CD8-positive, alpha-beta T cell (primary cell): ENCODE measurements at regions of chr1 and their contacts with region 1.

Region 1: GRCh38 chr1:34865981-34866761 is 6.6 kb upstream of the SMIM12 start:
- DNase-seq: peak; percentile 83 to 98 (median 92)
- ATAC-seq: peak; percentile 82
- H3K4me3 ChIP-seq: peak overlapping the region; percentile 68 to 78
- H3K4me3 Mint-ChIP-seq: peak overlapping the region; percentile 88
- H3K27ac ChIP-seq: peak overlapping the region; percentile 67 to 87
- H3K27ac Mint-ChIP-seq: peak overlapping the region; percentile 87
- H3K4me1 ChIP-seq: peaks cover 56% of the 10 kb centered on the region
- H3K4me1 Mint-ChIP-seq: peaks cover 44% of the 10 kb centered on the region
- H3K27me3 ChIP-seq: no peaks in the 10 kb centered on the region
- H3K27me3 Mint-ChIP-seq: no peaks in the 10 kb centered on the region
- CTCF ChIP-seq: peak; percentile 97

Region 2: DNA sequence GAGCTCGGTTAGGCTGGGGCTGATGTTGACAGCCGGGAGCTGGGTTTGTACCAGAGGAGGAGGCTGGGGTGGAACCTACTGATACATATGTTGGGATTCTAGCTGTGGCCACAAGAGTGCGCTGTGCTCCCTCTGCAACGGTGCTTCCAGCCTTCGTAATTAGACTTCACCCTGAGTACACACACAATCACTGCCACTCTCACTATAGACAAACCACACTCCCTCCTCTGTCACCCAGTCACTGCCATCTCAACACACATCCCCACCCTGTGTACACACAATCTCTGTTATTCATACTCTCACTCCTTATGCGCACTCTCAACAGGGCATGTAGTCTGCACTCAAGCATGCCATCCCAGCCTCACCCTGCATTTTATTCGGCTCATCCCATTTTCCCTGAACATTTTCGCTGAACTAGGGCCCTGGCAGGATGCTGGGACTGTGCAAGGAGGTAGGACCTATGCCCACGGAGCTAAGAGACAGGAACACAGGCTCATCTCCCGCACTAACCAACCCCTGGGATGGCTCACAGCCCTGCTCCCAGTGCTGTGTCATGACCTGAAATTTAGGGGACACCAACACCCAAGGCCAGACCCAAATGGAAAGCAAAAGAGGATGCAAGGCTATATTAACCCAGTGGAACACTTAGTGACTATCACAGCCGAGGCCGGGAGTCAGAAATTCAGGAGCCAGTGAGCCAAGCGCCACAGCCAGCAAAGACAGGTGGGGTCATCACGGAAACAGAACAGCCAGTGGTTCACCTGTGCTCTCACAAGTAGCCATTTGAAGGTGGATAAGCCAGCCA is 79.4 kb before region 1 on chr1:
- CTCF ChIA-PET with region 1: interaction called, 5 read pairs
- POLR2A ChIA-PET with region 1: interaction called, 3 read pairs
- intact Hi-C with region 1: loop called in 1 of 2 experiments (anchors 1 kb)
- DNase-seq: peak; percentile 25 to 76 (median 59)
- ATAC-seq: peak; percentile 89
- H3K4me3 ChIP-seq: no peak overlapping the region
- H3K4me3 Mint-ChIP-seq: no peak overlapping the region
- H3K27ac ChIP-seq: no peak overlapping the region
- H3K27ac Mint-ChIP-seq: no peak overlapping the region
- H3K4me1 ChIP-seq: no peaks in the 10 kb centered on the region
- H3K4me1 Mint-ChIP-seq: peaks cover 3% of the 10 kb centered on the region
- H3K27me3 ChIP-seq: peaks cover 9% of the 10 kb centered on the region in 2 experiments
- H3K27me3 Mint-ChIP-seq: peaks cover 51% of the 10 kb centered on the region
- CTCF ChIP-seq: peak; percentile 79

Region 3: DNA sequence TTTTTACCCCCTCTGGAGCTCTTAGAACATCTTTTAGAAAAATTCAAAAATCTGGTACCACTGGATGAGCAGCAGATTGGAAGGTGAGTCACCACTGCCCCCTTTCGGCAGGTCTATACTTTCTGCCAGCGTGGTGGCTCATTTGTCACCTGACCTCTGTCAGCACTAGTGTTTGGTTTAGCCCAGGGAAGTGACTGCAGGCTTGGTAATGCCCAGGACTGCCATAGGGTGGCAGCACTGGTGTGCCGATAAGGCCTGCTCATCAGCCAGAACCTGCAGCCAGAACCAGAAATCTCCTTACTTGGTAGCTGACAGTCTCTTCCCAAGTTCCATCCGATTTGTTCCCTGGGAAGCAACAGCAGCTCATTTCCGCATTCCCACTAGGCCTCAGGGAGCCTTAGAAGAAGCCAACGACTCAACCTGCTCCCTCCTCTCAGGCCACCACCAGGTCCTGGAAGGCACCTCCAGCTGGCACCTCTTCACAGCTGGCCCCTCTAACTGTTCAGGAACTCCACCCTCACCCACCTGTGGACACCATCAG is 13.4 kb before region 1 on chr1:
- CTCF ChIA-PET with region 1: interaction called, 129 read pairs
- POLR2A ChIA-PET with region 1: interaction called, 7 read pairs
- intact Hi-C with region 1: loop called (anchors 1 kb)
- DNase-seq: peak; percentile 77 to 96 (median 87)
- ATAC-seq: peak; percentile 100
- H3K4me3 ChIP-seq: no peak overlapping the region
- H3K4me3 Mint-ChIP-seq: no peak overlapping the region
- H3K27ac ChIP-seq: peak overlapping the region in 1 of 2 experiments; percentile 46
- H3K27ac Mint-ChIP-seq: peak overlapping the region; percentile 7
- H3K4me1 ChIP-seq: peaks cover 2% of the 10 kb centered on the region
- H3K4me1 Mint-ChIP-seq: peaks cover 23% of the 10 kb centered on the region
- H3K27me3 ChIP-seq: no peaks in the 10 kb centered on the region
- H3K27me3 Mint-ChIP-seq: no peaks in the 10 kb centered on the region
- CTCF ChIP-seq: peak; percentile 99

Region 4: GRCh38 chr1:34879230-34879629 is 13.1 kb after region 1 on chr1:
- CTCF ChIA-PET with region 1: interaction called, 13 read pairs
- POLR2A ChIA-PET with region 1: no interaction called
- intact Hi-C with region 1: no loop called
- DNase-seq: no peak
- ATAC-seq: no peak
- H3K4me3 ChIP-seq: no peak overlapping the region
- H3K4me3 Mint-ChIP-seq: no peak overlapping the region
- H3K27ac ChIP-seq: no peak overlapping the region
- H3K27ac Mint-ChIP-seq: no peak overlapping the region
- H3K4me1 ChIP-seq: no peaks in the 10 kb centered on the region
- H3K4me1 Mint-ChIP-seq: no peaks in the 10 kb centered on the region
- H3K27me3 ChIP-seq: peaks cover 0 to 4% of the 10 kb centered on the region in 2 experiments
- H3K27me3 Mint-ChIP-seq: peaks cover 37% of the 10 kb centered on the region
- CTCF ChIP-seq: no peak

Region 5: GRCh38 chr1:34946211-34946610 is 80.0 kb after region 1 on chr1:
- CTCF ChIA-PET with region 1: no interaction called
- POLR2A ChIA-PET with region 1: no interaction called
- intact Hi-C with region 1: no loop called
- DNase-seq: no peak
- ATAC-seq: no peak
- H3K4me3 ChIP-seq: no peak overlapping the region
- H3K4me3 Mint-ChIP-seq: no peak overlapping the region
- H3K27ac ChIP-seq: no peak overlapping the region
- H3K27ac Mint-ChIP-seq: no peak overlapping the region
- H3K4me1 ChIP-seq: no peaks in the 10 kb centered on the region
- H3K4me1 Mint-ChIP-seq: no peaks in the 10 kb centered on the region
- H3K27me3 ChIP-seq: no peaks in the 10 kb centered on the region
- H3K27me3 Mint-ChIP-seq: peaks cover 26% of the 10 kb centered on the region
- CTCF ChIP-seq: no peak

Region 6: DNA sequence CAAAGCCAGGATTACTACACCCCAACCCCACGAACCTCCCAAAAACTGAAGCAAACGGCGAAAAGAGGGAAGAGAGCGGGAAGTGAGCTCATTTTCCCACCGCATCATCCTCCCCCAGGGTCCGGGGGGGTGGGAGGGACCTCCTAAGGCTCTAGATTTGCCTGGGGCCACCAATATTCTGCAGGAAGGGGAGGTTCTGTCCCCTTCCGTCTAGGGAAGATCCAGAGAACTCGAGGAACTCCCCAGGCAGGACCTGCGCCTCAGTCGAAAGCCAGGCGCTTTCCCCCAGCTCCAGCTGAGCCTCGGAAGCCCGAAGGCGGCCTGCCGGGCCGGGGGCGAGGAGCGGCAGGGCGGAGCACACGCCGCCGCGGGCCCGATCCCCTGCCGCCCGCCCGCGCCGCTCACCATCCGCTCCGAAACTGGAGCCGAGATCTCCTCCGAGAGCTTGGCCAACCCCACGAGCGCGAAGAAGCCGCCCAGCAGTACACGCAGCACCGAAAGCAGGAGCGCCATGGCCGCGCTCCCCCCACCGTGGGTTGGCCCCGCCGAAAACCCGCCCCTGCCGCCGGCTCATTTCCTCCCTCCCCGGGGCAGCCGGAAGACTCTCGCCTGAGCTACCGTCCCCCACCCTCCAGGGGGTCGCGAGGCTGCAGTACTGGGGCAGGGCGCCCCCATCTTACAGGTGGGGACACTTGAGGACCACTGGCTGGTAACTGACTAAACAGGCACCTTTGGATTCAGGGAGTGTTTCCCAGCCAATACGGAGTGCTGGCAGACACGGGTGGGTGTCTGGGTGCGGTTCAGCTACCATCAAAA is 118.8 kb after region 1 on chr1 and contains the start of gene TMEM35B:
- CTCF ChIA-PET with region 1: interaction called, 7 read pairs
- POLR2A ChIA-PET with region 1: interaction called, 5 read pairs
- intact Hi-C with region 1: loop called in 1 of 2 experiments (anchors 5 kb)
- DNase-seq: peak; percentile 55 to 87 (median 82)
- ATAC-seq: peak; percentile 96
- H3K4me3 ChIP-seq: peak within 1 kb of the TSS; percentile 77 to 81
- H3K4me3 Mint-ChIP-seq: peak within 1 kb of the TSS; percentile 99
- H3K27ac ChIP-seq: peak within 1 kb of the TSS; percentile 80 to 87
- H3K27ac Mint-ChIP-seq: peak within 1 kb of the TSS; percentile 98
- H3K4me1 ChIP-seq: peaks cover 28% of the 10 kb centered on the region
- H3K4me1 Mint-ChIP-seq: peaks cover 42% of the 10 kb centered on the region
- H3K27me3 ChIP-seq: no peaks in the 10 kb centered on the region
- H3K27me3 Mint-ChIP-seq: no peaks in the 10 kb centered on the region
- CTCF ChIP-seq: no peak
- total RNA-seq, gene TMEM35B: 1.0 to 2.6 TPM

Region 7: DNA sequence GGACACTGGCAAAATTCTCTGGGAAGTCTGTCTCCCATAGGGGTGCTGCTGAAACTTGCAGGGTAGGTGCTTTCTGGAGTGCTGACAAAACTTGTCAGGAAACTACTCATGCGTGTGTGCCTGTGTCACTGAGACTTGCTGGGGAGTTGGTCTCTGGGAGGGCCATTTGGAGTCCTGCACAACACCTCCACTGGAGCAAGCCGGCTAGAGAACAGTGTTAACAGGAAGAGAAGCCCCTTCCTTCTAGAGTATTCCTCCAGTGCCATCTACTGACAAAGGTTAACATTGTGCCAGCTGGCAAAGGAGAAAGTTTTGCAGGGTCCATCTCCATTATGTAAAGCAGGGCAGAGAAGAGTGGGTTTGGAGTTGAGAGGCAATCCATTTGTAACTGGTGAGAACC is 432.3 kb after region 1 on chr1:
- CTCF ChIA-PET with region 1: no interaction called
- POLR2A ChIA-PET with region 1: no interaction called
- intact Hi-C with region 1: loop called in 1 of 2 experiments (anchors 5 kb)
- DNase-seq: peak in 7 of 9 experiments; percentile 16 to 72 (median 24)
- ATAC-seq: peak; percentile 96
- H3K4me3 ChIP-seq: no peak overlapping the region
- H3K4me3 Mint-ChIP-seq: no peak overlapping the region
- H3K27ac ChIP-seq: no peak overlapping the region
- H3K27ac Mint-ChIP-seq: peak overlapping the region; percentile 45
- H3K4me1 ChIP-seq: peaks cover 5% of the 10 kb centered on the region
- H3K4me1 Mint-ChIP-seq: peaks cover 14% of the 10 kb centered on the region
- H3K27me3 ChIP-seq: no peaks in the 10 kb centered on the region
- H3K27me3 Mint-ChIP-seq: no peaks in the 10 kb centered on the region
- CTCF ChIP-seq: peak; percentile 59